Heart left ventricle (tissue), 16 donors: ENCODE measurements at regions of chr12 and their contacts with region 1.

Region 1: GRCh38 chr12:91178139-91178561 is 4.5 kb downstream of the DCN start:
- DNase-seq: peak in 3 of 5 donors; percentile 8 to 24 (median 22)
- ATAC-seq: peak in 3 of 4 donors; percentile 50 to 56 (median 55)
- H3K4me3 ChIP-seq: peak overlapping the region in 10 of 12 donors; percentile 17 to 61 (median 48)
- H3K27ac ChIP-seq: peak overlapping the region; percentile 50 to 87 (median 75)
- H3K4me1 ChIP-seq: no peaks in the 10 kb centered on the region
- H3K27me3 ChIP-seq: no peaks in the 10 kb centered on the region
- CTCF ChIP-seq: peak in 9 of 12 donors; percentile 7 to 64 (median 44)
- POLR2A ChIP-seq: no peak

Region 2: GRCh38 chr12:90851800-90852717 is 326.1 kb before region 1 on chr12:
- intact Hi-C with region 1: no loop called
- DNase-seq: no peak
- ATAC-seq: no peak
- H3K4me3 ChIP-seq: no peak overlapping the region
- H3K27ac ChIP-seq: no peak overlapping the region
- H3K4me1 ChIP-seq: peaks cover 0 to 6% (median 0%) of the 10 kb centered on the region in 12 donors
- H3K27me3 ChIP-seq: no peaks in the 10 kb centered on the region
- CTCF ChIP-seq: no peak
- POLR2A ChIP-seq: no peak

Region 3: DNA sequence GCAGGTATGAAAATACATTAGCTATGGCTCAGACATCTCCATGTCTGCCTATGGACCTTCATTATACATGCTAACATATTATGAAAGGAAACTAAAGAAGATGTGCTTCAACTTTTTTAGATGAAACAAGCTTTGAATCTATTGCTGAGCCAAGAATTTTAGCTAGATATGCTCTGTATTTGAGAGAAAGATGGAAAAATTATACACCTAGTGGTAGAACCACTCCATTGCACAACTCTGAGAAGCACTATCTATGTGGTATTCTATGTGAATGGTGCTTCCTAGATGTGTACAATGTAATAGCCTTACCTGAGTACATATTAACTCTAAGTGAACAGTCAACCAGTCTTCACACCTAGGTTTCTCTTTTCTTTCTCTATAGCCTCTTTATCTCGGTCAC is 190.6 kb before region 1 on chr12:
- intact Hi-C with region 1: loop called in 1 of 10 experiments (anchors 10 kb)
- DNase-seq: no peak
- ATAC-seq: no peak
- H3K4me3 ChIP-seq: no peak overlapping the region
- H3K27ac ChIP-seq: no peak overlapping the region
- H3K4me1 ChIP-seq: peaks cover 0 to 6% (median 0%) of the 10 kb centered on the region in 12 donors
- H3K27me3 ChIP-seq: no peaks in the 10 kb centered on the region
- CTCF ChIP-seq: peak in 1 of 12 donors; percentile 29
- POLR2A ChIP-seq: no peak

Region 4: GRCh38 chr12:91127751-91128150 is 50.4 kb before region 1 on chr12:
- intact Hi-C with region 1: no loop called
- DNase-seq: no peak
- ATAC-seq: no peak
- H3K4me3 ChIP-seq: no peak overlapping the region
- H3K27ac ChIP-seq: no peak overlapping the region
- H3K4me1 ChIP-seq: peaks cover 0 to 8% (median 0%) of the 10 kb centered on the region in 12 donors
- H3K27me3 ChIP-seq: no peaks in the 10 kb centered on the region
- CTCF ChIP-seq: no peak
- POLR2A ChIP-seq: no peak

Region 5: DNA sequence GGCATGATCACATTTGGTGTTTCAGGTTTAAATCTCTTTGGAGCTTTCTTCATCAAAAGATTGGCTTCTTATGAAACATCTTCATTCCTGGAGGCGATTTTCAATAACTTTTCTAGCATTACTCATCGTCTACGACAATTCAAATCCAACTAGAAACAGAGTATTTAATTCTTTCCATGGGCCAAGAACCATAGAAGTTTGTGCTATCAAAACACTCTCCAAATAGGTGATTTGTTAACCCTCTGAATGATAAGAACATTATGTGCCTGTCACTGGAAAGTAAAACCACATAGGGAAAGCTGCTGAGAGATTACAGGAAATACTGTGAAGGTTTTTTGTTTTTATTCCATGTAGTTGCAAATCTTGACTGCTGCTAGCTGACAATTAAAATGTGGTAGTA is 11.4 kb after region 1 on chr12:
- intact Hi-C with region 1: no loop called
- DNase-seq: no peak
- ATAC-seq: peak in 1 of 4 donors; percentile 47
- H3K4me3 ChIP-seq: no peak overlapping the region
- H3K27ac ChIP-seq: peak overlapping the region in 4 of 12 donors; percentile 0 to 55 (median 26)
- H3K4me1 ChIP-seq: peaks cover 0 to 8% (median 0%) of the 10 kb centered on the region in 12 donors
- H3K27me3 ChIP-seq: no peaks in the 10 kb centered on the region
- CTCF ChIP-seq: no peak
- POLR2A ChIP-seq: no peak

Region 6: DNA sequence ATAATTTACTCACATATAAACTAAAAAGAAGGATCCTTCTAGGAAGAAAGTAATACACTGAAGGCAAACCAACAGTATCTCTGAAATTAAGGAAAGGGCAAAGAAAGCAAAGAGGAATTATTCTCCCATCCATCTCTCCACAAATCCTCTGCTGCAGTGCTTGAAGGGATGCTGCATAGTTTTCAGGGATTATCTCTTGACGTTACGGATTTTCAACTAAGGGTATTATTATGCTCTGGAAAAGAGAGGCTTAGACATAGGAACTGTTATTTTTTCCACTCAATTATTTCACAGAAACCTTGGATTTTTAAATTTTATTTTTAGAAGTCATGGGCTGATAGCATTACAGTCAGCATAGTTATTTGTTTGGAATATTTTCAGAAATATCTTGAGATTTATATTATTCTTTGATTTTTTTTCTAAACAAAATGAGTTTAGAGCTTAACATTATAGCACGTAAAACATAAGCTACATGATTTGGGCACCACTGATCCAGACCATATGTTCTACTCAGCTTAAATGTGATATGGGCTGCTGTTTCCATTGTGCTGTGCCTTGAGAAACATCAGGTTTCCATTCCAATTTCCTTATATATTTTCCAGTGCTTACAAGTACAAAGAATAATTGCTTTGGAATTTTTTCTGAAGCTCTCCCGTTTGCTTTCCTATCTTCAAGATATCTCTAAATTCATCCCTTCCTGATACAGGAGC is 62.4 kb after region 1 on chr12:
- intact Hi-C with region 1: loop called in 1 of 10 experiments (anchors 5 kb)
- DNase-seq: no peak
- ATAC-seq: no peak
- H3K4me3 ChIP-seq: no peak overlapping the region
- H3K27ac ChIP-seq: peak overlapping the region in 10 of 12 donors; percentile 6 to 75 (median 44)
- H3K4me1 ChIP-seq: peaks cover 0 to 16% (median 0%) of the 10 kb centered on the region in 12 donors
- H3K27me3 ChIP-seq: no peaks in the 10 kb centered on the region
- CTCF ChIP-seq: no peak
- POLR2A ChIP-seq: no peak

Region 7: DNA sequence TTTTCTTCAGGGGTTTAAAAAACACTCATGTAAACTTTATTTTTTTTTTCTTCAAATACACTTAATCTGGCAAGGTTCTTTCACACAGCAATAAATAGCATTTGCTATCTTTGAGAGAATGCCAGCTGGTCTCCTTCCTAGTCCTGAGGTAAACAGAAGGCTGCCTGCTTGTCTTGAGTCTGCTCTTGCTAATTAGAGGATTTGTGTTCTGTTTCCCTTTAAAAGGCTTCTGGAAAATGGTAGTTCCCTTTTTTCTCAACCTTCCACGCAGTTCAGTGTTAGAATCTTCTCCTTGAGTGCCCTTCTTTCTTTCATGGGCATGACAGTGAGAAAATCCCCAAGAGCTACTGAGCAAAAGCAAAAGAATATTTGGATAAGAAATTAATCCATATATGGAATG is 96.8 kb after region 1 on chr12:
- intact Hi-C with region 1: loop called in 3 of 10 experiments (anchors 2 to 5 kb)
- DNase-seq: peak in 1 of 5 donors; percentile 43
- ATAC-seq: peak in 3 of 4 donors; percentile 22 to 36 (median 35)
- H3K4me3 ChIP-seq: no peak overlapping the region
- H3K27ac ChIP-seq: peak overlapping the region; percentile 26 to 93 (median 62)
- H3K4me1 ChIP-seq: peaks cover 0 to 53% (median 5%) of the 10 kb centered on the region in 12 donors
- H3K27me3 ChIP-seq: no peaks in the 10 kb centered on the region
- CTCF ChIP-seq: no peak
- POLR2A ChIP-seq: no peak

Region 8: GRCh38 chr12:91326058-91327027 is 148.2 kb after region 1 on chr12:
- intact Hi-C with region 1: loop called (anchors 1 to 10 kb)
- DNase-seq: peak in 2 of 5 donors; percentile 37 to 47
- ATAC-seq: peak in 2 of 4 donors; percentile 62 to 65
- H3K4me3 ChIP-seq: peak overlapping the region in 4 of 12 donors; percentile 4 to 17 (median 14)
- H3K27ac ChIP-seq: peak overlapping the region in 9 of 12 donors; percentile 13 to 70 (median 56)
- H3K4me1 ChIP-seq: peaks cover 0 to 10% (median 0%) of the 10 kb centered on the region in 12 donors
- H3K27me3 ChIP-seq: no peaks in the 10 kb centered on the region
- CTCF ChIP-seq: peak; percentile 56 to 85 (median 72)
- POLR2A ChIP-seq: no peak

Region 9: DNA sequence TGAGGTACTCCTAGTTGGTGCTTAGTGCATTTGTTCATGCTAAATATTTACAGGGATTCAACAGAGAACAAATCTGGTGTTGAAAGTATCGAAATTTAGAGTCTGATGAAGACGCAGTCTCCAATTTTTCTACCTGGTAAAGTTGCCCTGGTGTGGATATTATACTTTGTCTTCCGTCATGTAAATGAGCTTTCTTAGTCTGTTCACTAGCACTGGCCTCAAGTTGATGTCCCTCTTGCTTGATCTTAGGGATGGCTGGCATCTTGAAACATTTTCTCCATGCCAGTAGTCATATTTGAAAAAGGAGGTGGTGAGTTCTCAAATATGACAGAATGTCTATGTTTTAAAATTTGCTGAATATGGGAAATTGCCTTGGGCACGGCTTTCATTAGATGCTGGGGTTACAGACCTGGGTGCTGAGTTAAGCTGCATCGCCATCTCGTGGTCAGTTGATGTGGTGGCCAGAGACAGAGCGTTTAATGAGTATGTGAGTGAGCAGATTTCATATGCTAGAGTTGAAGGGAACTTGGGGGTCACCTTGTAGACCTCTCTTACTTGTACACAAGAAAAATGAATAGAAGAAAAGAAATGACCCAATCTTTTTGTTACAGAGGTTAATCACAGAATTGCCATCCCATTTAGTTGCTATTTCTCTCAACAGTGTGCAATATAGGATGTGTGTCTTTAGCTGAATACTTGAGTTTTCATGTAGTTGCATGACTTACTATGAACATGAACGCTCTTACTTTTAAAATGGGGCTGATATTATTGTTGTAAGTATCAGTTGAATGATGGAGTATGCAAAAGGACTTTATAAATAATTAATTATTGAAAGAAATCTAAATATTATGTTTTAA is 177.2 kb after region 1 on chr12:
- intact Hi-C with region 1: loop called in 2 of 10 experiments (anchors 10 kb)
- DNase-seq: peak; percentile 43 to 67 (median 61)
- ATAC-seq: peak; percentile 71 to 96 (median 90)
- H3K4me3 ChIP-seq: no peak overlapping the region
- H3K27ac ChIP-seq: no peak overlapping the region
- H3K4me1 ChIP-seq: no peaks in the 10 kb centered on the region
- H3K27me3 ChIP-seq: no peaks in the 10 kb centered on the region
- CTCF ChIP-seq: peak; percentile 59 to 89 (median 78)
- POLR2A ChIP-seq: no peak